ENCODE measurements at regions of chr20 and their contacts with region 1.

Region 1: GRCh38 chr20:31523361-31524283 is 9.4 kb downstream of the HM13 start:
- DNase-seq: peak; percentile 94 to 98 (median 96)
- H3K4me3 ChIP-seq: peak overlapping the region in 1 of 3 experiments; percentile 53
- H3K4me3 Mint-ChIP-seq: peak overlapping the region; percentile 39 to 83
- H3K27ac ChIP-seq: peak overlapping the region; percentile 81 to 94
- H3K27ac Mint-ChIP-seq: peak overlapping the region; percentile 93 to 99 (median 97)
- H3K4me1 ChIP-seq: peaks cover 67% of the 10 kb centered on the region in 2 donors
- H3K4me1 Mint-ChIP-seq: peaks cover 65% of the 10 kb centered on the region
- H3K27me3 ChIP-seq: no peaks in the 10 kb centered on the region
- H3K27me3 Mint-ChIP-seq: peaks cover 0 to 4% (median 3%) of the 10 kb centered on the region in 3 donors
- CTCF ChIP-seq: no peak

Region 2: GRCh38 chr20:31560094-31560899 is 36.7 kb after region 1 on chr20:
- intact Hi-C with region 1: loop called in 1 of 2 experiments (anchors 2 kb)
- DNase-seq: peak; percentile 88 to 92 (median 90)
- H3K4me3 ChIP-seq: peak overlapping the region in 1 of 3 experiments; percentile 29
- H3K4me3 Mint-ChIP-seq: peak overlapping the region in 1 of 2 donors; percentile 30
- H3K27ac ChIP-seq: peak overlapping the region; percentile 66 to 91
- H3K27ac Mint-ChIP-seq: peak overlapping the region; percentile 87 to 98 (median 95)
- H3K4me1 ChIP-seq: peaks cover 19 to 27% of the 10 kb centered on the region in 2 donors
- H3K4me1 Mint-ChIP-seq: peaks cover 24% of the 10 kb centered on the region
- H3K27me3 ChIP-seq: no peaks in the 10 kb centered on the region
- H3K27me3 Mint-ChIP-seq: peaks cover 0 to 2% (median 0%) of the 10 kb centered on the region in 3 donors
- CTCF ChIP-seq: peak; percentile 95

Region 3: GRCh38 chr20:31712564-31713311 is 189.1 kb after region 1 on chr20:
- intact Hi-C with region 1: loop called in 1 of 2 experiments (anchors 10 kb)
- DNase-seq: no peak
- H3K4me3 ChIP-seq: no peak overlapping the region
- H3K4me3 Mint-ChIP-seq: no peak overlapping the region
- H3K27ac ChIP-seq: no peak overlapping the region
- H3K27ac Mint-ChIP-seq: peak overlapping the region in 5 of 7 donors; percentile 19 to 57 (median 36)
- H3K4me1 ChIP-seq: peaks cover 7 to 12% of the 10 kb centered on the region in 2 donors
- H3K4me1 Mint-ChIP-seq: peaks cover 40% of the 10 kb centered on the region
- H3K27me3 ChIP-seq: no peaks in the 10 kb centered on the region
- H3K27me3 Mint-ChIP-seq: peaks cover 0 to 3% (median 3%) of the 10 kb centered on the region in 3 donors
- CTCF ChIP-seq: no peak